A673 (cell line): ENCODE measurements at regions of chr15 and their contacts with region 1.

Region 1: GRCh38 chr15:59039225-59039624 is 51.8 kb downstream of the RNF111 start:
- DNase-seq: no peak
- H3K4me3 ChIP-seq: no peak overlapping the region
- H3K27ac ChIP-seq: no peak overlapping the region
- H3K4me1 ChIP-seq: no peaks in the 10 kb centered on the region
- H3K27me3 ChIP-seq: no peaks in the 10 kb centered on the region
- CTCF ChIP-seq: no peak

Region 2: GRCh38 chr15:58690703-58691102 is 348.5 kb before region 1 on chr15:
- CTCF ChIA-PET with region 1: no interaction called
- POLR2A ChIA-PET with region 1: interaction called, 11 read pairs
- intact Hi-C with region 1: no loop called
- DNase-seq: no peak
- H3K4me3 ChIP-seq: no peak overlapping the region
- H3K27ac ChIP-seq: no peak overlapping the region
- H3K4me1 ChIP-seq: peaks cover 3% of the 10 kb centered on the region
- H3K27me3 ChIP-seq: no peaks in the 10 kb centered on the region
- CTCF ChIP-seq: no peak

Region 3: GRCh38 chr15:59087731-59088130 is 48.5 kb after region 1 on chr15:
- CTCF ChIA-PET with region 1: no interaction called
- POLR2A ChIA-PET with region 1: no interaction called
- intact Hi-C with region 1: no loop called
- DNase-seq: no peak
- H3K4me3 ChIP-seq: no peak overlapping the region
- H3K27ac ChIP-seq: no peak overlapping the region
- H3K4me1 ChIP-seq: no peaks in the 10 kb centered on the region
- H3K27me3 ChIP-seq: no peaks in the 10 kb centered on the region
- CTCF ChIP-seq: no peak